B cell (primary cell): ENCODE measurements at regions of chr1 and their contacts with region 1.

Region 1: DNA sequence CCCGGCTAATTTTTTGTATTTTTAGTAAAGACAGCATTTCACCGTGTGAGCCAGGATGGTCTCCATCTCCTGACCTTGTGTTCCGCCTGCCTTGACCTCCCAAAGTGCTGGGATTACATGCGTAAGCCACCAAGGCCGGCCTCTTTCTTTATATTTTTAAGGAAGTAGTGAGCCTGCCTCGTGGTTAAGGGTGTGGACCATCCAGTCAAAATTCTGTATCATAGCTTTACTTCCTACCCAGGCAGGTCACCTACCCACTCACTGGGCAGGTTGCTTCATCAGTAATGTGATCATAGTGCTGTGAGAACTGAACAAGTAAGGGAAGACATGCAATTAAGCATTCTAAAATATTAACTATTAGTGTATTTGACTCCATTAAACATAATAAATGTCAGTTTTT is 8.1 kb upstream of the ACOT7 start:
- DNase-seq: no peak
- ATAC-seq: no peak
- H3K4me3 ChIP-seq: no peak overlapping the region
- H3K4me3 Mint-ChIP-seq: no peak overlapping the region
- H3K27ac ChIP-seq: no peak overlapping the region
- H3K27ac Mint-ChIP-seq: no peak overlapping the region
- H3K4me1 ChIP-seq: no peaks in the 10 kb centered on the region
- H3K4me1 Mint-ChIP-seq: no peaks in the 10 kb centered on the region
- H3K27me3 ChIP-seq: peaks cover 0 to 3% (median 0%) of the 10 kb centered on the region in 4 experiments
- H3K27me3 Mint-ChIP-seq: peaks cover 14% of the 10 kb centered on the region
- CTCF ChIP-seq: no peak

Region 2: GRCh38 chr1:5975133-5975880 is 426.4 kb before region 1 on chr1:
- CTCF ChIA-PET with region 1: no interaction called
- POLR2A ChIA-PET with region 1: no interaction called
- intact Hi-C with region 1: no loop called
- DNase-seq: peak; percentile 66
- ATAC-seq: peak; percentile 51
- H3K4me3 ChIP-seq: no peak overlapping the region
- H3K4me3 Mint-ChIP-seq: no peak overlapping the region
- H3K27ac ChIP-seq: no peak overlapping the region
- H3K27ac Mint-ChIP-seq: no peak overlapping the region
- H3K4me1 ChIP-seq: peaks cover 0 to under 1% of the 10 kb centered on the region in 2 donors
- H3K4me1 Mint-ChIP-seq: peaks cover 2% of the 10 kb centered on the region
- H3K27me3 ChIP-seq: no peaks in the 10 kb centered on the region
- H3K27me3 Mint-ChIP-seq: no peaks in the 10 kb centered on the region
- CTCF ChIP-seq: peak; percentile 76

Region 3: DNA sequence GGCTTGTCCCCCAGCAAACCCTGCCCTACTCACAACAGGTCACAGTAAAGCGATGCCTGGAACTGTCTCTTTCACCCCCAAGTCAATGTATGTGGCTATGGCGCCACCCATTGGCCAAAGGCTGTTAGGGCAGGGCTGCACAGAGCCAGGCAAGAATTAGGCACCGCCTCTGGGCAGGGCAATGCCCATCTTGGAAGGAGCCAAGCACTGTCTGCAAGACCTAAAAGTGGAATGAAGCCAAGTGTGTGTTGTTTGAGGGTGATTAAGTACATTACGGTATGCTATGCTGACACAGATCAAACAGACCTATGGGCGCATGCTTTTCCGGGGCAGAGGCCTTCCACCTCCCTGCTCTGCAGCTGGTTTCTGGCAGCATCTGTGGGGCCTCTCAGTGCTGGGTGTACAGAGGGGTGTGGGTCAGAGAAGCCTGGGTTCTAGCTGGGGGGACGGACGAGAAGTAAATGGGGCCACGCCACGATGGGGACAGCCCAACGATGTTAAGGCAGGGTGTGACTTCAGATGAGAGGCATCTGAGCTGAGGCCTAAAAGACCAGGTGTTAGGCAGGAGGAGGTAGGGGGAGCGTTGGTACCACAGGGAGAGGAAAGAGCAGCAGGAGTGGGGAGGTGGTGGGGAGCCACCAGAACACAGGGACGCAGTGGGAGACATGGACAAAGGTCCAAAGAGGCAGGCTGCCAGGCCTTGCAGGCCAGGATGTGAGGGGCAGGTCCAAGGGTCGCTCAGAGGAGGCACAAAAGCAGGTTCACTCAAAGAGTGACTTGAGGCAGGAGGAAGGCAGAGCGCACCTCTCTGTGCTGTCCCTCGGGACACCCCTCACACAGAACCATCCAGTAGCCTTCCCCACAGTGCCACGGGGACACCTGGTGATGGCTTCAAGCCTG is 57.9 kb before region 1 on chr1:
- CTCF ChIA-PET with region 1: interaction called, 56 read pairs
- POLR2A ChIA-PET with region 1: no interaction called
- intact Hi-C with region 1: no loop called
- DNase-seq: peak; percentile 43
- ATAC-seq: peak; percentile 54
- H3K4me3 ChIP-seq: no peak overlapping the region
- H3K4me3 Mint-ChIP-seq: no peak overlapping the region
- H3K27ac ChIP-seq: no peak overlapping the region
- H3K27ac Mint-ChIP-seq: no peak overlapping the region
- H3K4me1 ChIP-seq: peaks cover 2 to 9% of the 10 kb centered on the region in 2 donors
- H3K4me1 Mint-ChIP-seq: peaks cover 6% of the 10 kb centered on the region
- H3K27me3 ChIP-seq: no peaks in the 10 kb centered on the region
- H3K27me3 Mint-ChIP-seq: no peaks in the 10 kb centered on the region
- CTCF ChIP-seq: peak; percentile 63

Region 4: GRCh38 chr1:6475381-6476133 is 73.9 kb after region 1 on chr1:
- CTCF ChIA-PET with region 1: no interaction called
- POLR2A ChIA-PET with region 1: no interaction called
- intact Hi-C with region 1: no loop called
- DNase-seq: peak; percentile 79
- ATAC-seq: peak; percentile 90
- H3K4me3 ChIP-seq: no peak overlapping the region
- H3K4me3 Mint-ChIP-seq: no peak overlapping the region
- H3K27ac ChIP-seq: no peak overlapping the region
- H3K27ac Mint-ChIP-seq: no peak overlapping the region
- H3K4me1 ChIP-seq: peaks cover 2 to 6% of the 10 kb centered on the region in 2 donors
- H3K4me1 Mint-ChIP-seq: peaks cover 2% of the 10 kb centered on the region
- H3K27me3 ChIP-seq: peaks cover 0 to 4% (median 0%) of the 10 kb centered on the region in 4 experiments
- H3K27me3 Mint-ChIP-seq: peaks cover 3% of the 10 kb centered on the region
- CTCF ChIP-seq: peak; percentile 95